ENCODE measurements at regions of chr18 and their contacts with region 1.

Region 1: DNA sequence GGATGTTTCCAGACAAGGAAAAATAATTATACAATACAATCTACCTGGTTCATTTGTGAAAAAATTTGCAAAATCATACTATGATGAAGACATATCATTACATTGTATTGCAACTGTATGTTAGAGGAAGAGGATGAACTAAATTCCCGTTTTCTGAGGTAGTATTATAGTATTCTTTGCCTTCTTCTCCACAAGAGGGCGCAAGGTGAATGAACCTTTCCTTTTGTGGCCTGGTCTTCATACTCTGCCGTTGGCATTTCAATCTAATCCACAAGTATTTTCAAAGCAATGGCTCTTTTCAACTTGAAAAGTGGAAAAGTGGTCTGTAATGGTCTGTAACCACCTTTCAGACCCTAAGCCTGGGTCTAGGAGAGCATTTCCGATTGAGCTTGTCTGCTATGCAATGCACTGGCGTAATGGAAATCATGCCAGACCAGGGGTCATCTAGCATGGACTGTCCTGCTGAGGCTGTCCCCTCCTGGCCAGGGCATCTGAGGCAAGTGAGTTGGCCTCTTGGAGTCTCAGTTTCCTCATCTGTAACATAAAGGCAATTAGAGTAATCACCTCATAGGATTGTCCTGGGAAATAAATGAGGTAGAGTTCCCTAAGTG is 30.8 kb upstream of the ZNF396 start:
- DNase-seq: peak in 6 of 9 experiments; percentile 10 to 75 (median 41)
- ATAC-seq: peak; percentile 81
- H3K4me3 ChIP-seq: no peak overlapping the region
- H3K4me3 Mint-ChIP-seq: no peak overlapping the region
- H3K27ac ChIP-seq: no peak overlapping the region
- H3K27ac Mint-ChIP-seq: no peak overlapping the region
- H3K4me1 ChIP-seq: peaks cover 6% of the 10 kb centered on the region
- H3K4me1 Mint-ChIP-seq: peaks cover 11% of the 10 kb centered on the region
- H3K27me3 ChIP-seq: no peaks in the 10 kb centered on the region
- H3K27me3 Mint-ChIP-seq: no peaks in the 10 kb centered on the region
- CTCF ChIP-seq: peak; percentile 91

Region 2: GRCh38 chr18:35231052-35231451 is 176.9 kb before region 1 on chr18:
- CTCF ChIA-PET with region 1: interaction called, 5 read pairs
- POLR2A ChIA-PET with region 1: no interaction called
- intact Hi-C with region 1: loop called (anchors 1 to 5 kb)
- DNase-seq: peak; percentile 59 to 89 (median 80)
- ATAC-seq: peak; percentile 98
- H3K4me3 ChIP-seq: no peak overlapping the region
- H3K4me3 Mint-ChIP-seq: peak overlapping the region; percentile 50
- H3K27ac ChIP-seq: no peak overlapping the region
- H3K27ac Mint-ChIP-seq: no peak overlapping the region
- H3K4me1 ChIP-seq: no peaks in the 10 kb centered on the region
- H3K4me1 Mint-ChIP-seq: peaks cover 3% of the 10 kb centered on the region
- H3K27me3 ChIP-seq: peaks cover 0 to 3% of the 10 kb centered on the region in 2 experiments
- H3K27me3 Mint-ChIP-seq: no peaks in the 10 kb centered on the region
- CTCF ChIP-seq: peak; percentile 92

Region 3: DNA sequence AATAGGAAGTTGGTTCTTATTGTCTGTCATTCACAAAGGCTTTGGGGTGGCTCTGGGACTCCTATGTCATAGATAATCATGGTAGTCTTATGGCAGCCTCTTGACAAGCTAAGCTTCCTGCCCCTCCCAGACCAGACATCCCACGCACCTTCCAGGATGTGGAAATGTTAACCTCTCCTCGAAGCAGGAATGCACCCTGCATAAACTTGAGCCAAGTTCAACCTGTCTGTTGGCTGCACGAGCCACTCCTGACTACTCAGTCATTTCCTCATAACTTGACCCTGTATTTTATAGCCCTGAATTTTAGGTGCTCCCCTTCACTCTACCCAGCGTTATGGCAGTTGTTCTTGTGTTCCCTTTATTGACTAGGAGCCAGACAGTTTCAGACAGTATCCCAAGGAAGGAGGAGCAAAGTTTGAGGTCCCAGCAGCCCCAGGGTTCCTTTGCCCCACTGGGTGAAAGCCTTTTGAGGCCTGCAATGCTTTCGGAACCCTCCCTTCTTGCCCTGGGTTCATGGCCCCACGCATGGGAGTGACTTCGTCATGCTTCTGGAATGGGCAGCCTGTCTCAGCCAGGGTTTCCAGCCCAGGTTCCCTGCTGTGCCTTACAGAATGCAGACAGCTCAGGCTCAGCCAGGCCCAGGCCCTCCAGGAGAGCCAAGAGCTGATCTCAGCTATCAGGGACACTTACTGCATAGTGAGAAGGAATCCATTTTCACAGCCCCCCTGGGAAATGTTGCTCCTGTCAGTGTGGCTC is 105.4 kb after region 1 on chr18:
- CTCF ChIA-PET with region 1: no interaction called
- POLR2A ChIA-PET with region 1: no interaction called
- intact Hi-C with region 1: loop called in 1 of 2 experiments (anchors 5 kb)
- DNase-seq: no peak
- ATAC-seq: no peak
- H3K4me3 ChIP-seq: no peak overlapping the region
- H3K4me3 Mint-ChIP-seq: no peak overlapping the region
- H3K27ac ChIP-seq: no peak overlapping the region
- H3K27ac Mint-ChIP-seq: no peak overlapping the region
- H3K4me1 ChIP-seq: no peaks in the 10 kb centered on the region
- H3K4me1 Mint-ChIP-seq: no peaks in the 10 kb centered on the region
- H3K27me3 ChIP-seq: no peaks in the 10 kb centered on the region
- H3K27me3 Mint-ChIP-seq: no peaks in the 10 kb centered on the region
- CTCF ChIP-seq: no peak

Region 4: GRCh38 chr18:35756506-35757117 is 348.6 kb after region 1 on chr18:
- CTCF ChIA-PET with region 1: interaction called, 3 read pairs
- POLR2A ChIA-PET with region 1: no interaction called
- intact Hi-C with region 1: loop called in 1 of 2 experiments (anchors 5 kb)
- DNase-seq: peak in 8 of 9 experiments; percentile 35 to 64 (median 54)
- ATAC-seq: peak; percentile 40
- H3K4me3 ChIP-seq: no peak overlapping the region
- H3K4me3 Mint-ChIP-seq: no peak overlapping the region
- H3K27ac ChIP-seq: no peak overlapping the region
- H3K27ac Mint-ChIP-seq: no peak overlapping the region
- H3K4me1 ChIP-seq: no peaks in the 10 kb centered on the region
- H3K4me1 Mint-ChIP-seq: no peaks in the 10 kb centered on the region
- H3K27me3 ChIP-seq: peaks cover 0 to 8% of the 10 kb centered on the region in 2 experiments
- H3K27me3 Mint-ChIP-seq: peaks cover 24% of the 10 kb centered on the region
- CTCF ChIP-seq: peak; percentile 84

Region 5: DNA sequence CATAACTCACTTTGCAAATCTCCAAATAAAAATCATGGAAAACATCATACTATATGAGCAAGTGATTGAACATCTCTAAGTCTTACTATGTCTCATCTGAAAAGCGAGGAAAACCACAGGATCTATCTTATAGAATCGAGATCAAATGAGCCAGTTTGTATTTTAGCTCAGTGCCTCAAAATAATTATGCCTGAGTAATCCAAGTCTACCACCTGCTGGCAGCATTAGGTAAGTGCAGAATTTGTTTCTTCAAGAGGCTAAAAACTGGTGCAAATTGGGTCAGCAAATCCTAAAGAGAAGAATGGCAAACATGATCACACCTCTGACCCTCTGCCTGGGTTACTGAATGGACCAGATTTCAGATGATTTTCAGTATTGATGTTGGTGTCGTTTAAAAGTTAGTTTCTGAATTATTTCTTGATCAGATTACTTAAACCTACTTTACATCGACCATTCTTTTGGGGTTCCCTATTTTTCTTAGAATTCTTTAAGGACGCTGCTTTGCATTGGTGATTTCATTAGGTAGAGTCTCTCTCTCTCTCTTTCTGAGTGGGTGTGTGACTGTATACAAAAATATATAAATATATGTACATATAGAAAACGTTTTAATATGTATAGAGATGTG is 876.8 kb after region 1 on chr18:
- CTCF ChIA-PET with region 1: no interaction called
- POLR2A ChIA-PET with region 1: no interaction called
- intact Hi-C with region 1: loop called (anchors 2 kb)
- DNase-seq: peak in 8 of 9 experiments; percentile 16 to 75 (median 46)
- ATAC-seq: peak; percentile 77
- H3K4me3 ChIP-seq: no peak overlapping the region
- H3K4me3 Mint-ChIP-seq: no peak overlapping the region
- H3K27ac ChIP-seq: no peak overlapping the region
- H3K27ac Mint-ChIP-seq: no peak overlapping the region
- H3K4me1 ChIP-seq: no peaks in the 10 kb centered on the region
- H3K4me1 Mint-ChIP-seq: peaks cover 2% of the 10 kb centered on the region
- H3K27me3 ChIP-seq: no peaks in the 10 kb centered on the region
- H3K27me3 Mint-ChIP-seq: peaks cover 23% of the 10 kb centered on the region
- CTCF ChIP-seq: peak; percentile 95